ENCODE measurements at regions of chrX and their contacts with region 1.

Region 1: DNA sequence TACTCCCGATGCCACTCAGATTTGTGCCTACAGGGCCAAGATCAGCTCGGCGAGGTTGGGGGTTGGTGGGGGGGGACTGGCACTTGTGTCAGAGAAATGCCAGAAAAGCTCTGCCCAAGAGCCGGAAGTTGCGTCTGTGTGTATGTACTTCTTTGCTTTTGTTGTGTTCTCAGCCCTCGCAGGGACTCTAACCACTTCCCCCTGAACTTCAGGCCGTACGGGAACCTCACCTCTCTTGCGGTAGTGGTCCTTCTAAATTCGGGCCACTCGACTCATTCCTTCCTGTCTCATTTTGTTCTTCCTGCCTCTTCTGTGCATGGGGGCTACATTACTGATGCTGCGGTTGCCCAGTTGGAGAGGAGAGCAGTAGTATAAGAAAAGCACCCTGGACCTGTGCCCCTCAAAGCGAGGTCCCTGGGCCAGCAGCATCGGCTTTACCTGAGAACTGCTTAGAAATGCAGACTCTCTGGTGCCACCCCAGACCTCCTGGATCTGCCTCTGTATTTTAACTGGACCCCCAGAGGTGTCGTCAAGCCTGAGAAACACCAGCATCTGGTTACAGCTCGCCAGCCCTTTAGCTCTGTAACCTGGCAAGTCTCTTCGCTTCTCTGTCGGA is 146.3 kb upstream of the RPS6KA3 start:
- DNase-seq: peak; percentile 4 to 82 (median 60)
- ATAC-seq: peak; percentile 83 to 92
- H3K4me3 Mint-ChIP-seq: peak overlapping the region; percentile 38 to 83 (median 62)
- H3K27ac Mint-ChIP-seq: peak overlapping the region; percentile 87 to 97 (median 94)
- H3K4me1 Mint-ChIP-seq: peaks cover 7 to 55% (median 49%) of the 10 kb centered on the region in 4 donors
- H3K27me3 Mint-ChIP-seq: no peaks in the 10 kb centered on the region

Region 2: GRCh38 chrX:20437683-20438082 is 24.7 kb after region 1 on chrX:
- POLR2A ChIA-PET with region 1: interaction called, 43 read pairs
- DNase-seq: peak in 2 of 10 donors; percentile 38 to 46
- ATAC-seq: peak; percentile 59 to 78
- H3K4me3 Mint-ChIP-seq: peak overlapping the region; percentile 38 to 74 (median 67)
- H3K27ac Mint-ChIP-seq: peak overlapping the region; percentile 75 to 96 (median 89)
- H3K4me1 Mint-ChIP-seq: peaks cover 19 to 79% (median 77%) of the 10 kb centered on the region in 4 donors
- H3K27me3 Mint-ChIP-seq: no peaks in the 10 kb centered on the region

Region 3: DNA sequence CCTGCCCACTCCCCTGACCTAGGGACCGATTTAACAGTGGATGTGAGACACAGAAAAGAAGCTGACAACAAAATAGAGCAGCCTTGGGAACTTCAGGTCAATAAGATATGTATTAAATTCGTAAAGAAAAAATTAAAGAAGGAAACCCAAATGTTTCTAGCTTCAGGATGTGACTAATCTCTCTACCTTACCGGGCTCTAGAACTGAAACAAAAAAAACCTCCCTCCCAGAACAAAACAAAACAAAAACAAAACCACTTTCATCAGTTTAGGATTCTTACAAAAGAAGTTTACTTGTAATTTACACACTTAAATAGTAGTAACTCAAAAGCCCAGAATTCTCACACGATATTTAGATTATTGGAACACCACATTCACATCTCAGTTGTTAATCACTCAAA is 39.5 kb after region 1 on chrX:
- POLR2A ChIA-PET with region 1: no interaction called
- DNase-seq: no peak
- ATAC-seq: no peak
- H3K4me3 Mint-ChIP-seq: peak overlapping the region in 3 of 10 donors; percentile 1 to 39 (median 7)
- H3K27ac Mint-ChIP-seq: peak overlapping the region in 4 of 10 donors; percentile 51 to 80 (median 66)
- H3K4me1 Mint-ChIP-seq: peaks cover 4 to 21% (median 15%) of the 10 kb centered on the region in 4 donors
- H3K27me3 Mint-ChIP-seq: no peaks in the 10 kb centered on the region

Measured in naive thymus-derived CD8-positive, alpha-beta T cell (primary cell).